AG04449 (cell line): ENCODE measurements at regions of chr16 and their contacts with region 1.

Region 1: DNA sequence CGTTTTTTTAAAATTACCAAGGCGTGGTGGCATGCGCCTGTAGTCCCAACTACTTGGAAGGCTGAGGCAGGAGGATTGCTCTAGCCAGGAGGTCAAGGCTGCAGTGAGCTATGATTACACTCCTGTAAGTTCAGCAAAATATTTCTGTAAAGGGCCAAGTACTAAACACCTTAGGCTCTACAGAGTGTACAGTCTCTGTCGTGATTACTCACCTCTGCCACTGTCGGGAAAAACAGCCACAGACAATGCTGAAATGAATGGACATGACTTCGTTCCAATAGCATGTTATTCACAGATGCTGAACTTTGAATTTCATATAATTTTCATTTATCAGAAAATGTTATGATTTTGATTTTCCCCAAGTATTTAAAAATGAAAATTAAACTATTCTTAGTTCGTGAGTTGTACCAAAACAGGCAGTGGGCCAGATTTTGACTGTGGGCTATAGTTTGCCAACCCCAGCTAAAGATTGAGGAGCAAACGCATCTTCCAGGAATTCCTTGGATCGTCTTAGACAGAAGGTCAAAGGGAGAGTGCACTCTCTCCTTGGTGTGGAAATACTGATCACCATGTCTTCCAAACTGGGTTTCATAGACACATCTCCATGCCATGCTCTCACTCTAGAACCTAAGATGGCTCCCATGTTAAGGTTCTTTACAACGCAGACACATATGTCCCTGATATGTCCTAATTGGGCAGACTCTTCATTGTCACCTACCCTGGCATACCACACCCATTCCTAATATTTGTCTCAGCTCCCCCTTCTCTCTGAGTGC is 89.5 kb downstream of the MARF1 start:
- DNase-seq: no peak
- H3K4me3 ChIP-seq: no peak overlapping the region
- CTCF ChIP-seq: no peak

Region 2: GRCh38 chr16:15572329-15573001 is 19.0 kb after region 1 on chr16:
- CTCF ChIA-PET with region 1: interaction called, 20 read pairs
- POLR2A ChIA-PET with region 1: interaction called, 3 read pairs
- DNase-seq: peak; percentile 33
- H3K4me3 ChIP-seq: no peak overlapping the region
- CTCF ChIP-seq: no peak

Region 3: DNA sequence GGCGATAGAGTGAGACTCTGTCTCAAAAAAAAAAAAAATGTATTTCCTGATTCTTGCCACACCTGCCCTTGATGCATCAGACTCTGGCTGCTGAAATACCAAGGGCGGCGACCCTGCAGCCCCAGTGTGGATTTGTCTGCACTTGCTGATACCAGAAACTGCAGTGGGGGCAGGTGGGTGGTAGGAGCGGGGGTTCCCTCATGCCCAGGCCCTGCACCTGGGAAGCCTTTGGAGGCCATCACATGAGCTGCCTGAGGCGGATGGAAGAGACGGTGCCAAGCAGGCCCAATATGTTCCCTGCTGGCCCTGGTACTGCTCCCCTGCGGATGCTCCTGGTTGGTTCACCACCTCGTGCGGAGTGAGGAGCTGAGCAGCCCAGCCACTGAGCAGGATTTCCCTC is 38.8 kb after region 1 on chr16:
- CTCF ChIA-PET with region 1: no interaction called
- POLR2A ChIA-PET with region 1: no interaction called
- DNase-seq: no peak
- H3K4me3 ChIP-seq: no peak overlapping the region
- CTCF ChIP-seq: no peak